Thyroid gland (tissue), 4 donors: ENCODE measurements at regions of chr6 and their contacts with region 1.

Region 1: DNA sequence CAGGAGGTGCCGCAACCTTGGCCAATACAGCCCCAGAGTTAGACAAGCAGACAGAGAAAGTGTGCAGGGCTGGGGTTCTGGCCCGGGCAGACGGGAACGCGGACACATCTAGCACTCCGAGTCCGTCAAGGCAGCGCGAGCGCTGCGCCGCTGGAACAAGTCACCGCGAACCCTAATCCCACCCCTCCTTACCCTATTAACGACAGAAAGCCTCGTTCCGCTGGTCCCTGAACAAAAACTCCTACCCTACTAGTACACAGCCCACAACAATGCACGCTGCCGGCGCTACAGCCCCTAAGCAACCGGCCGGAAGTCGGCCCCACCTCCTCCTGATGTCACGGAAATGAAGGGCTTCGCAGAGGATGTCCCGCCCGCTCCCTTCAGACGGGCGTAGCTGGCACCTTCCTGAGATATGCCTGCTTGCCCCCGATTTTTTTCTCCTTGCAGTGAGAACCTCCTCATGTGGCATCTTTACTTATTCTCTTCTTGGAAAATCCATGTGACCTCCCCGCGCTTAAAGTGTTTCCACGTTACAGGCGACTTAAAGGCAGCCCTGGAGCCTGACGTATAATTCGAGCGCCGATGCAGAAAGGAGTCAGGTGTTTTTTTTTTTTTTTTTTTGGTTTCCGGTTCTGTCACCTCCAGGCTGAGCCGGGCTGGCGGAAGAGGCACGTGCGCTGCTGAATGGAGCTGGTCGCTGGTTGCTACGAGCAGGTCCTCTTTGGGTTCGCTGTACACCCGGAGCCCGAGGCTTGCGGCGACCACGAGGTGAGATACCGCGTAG is at the starts of genes C6orf52 and PAK1IP1:
- DNase-seq: peak; percentile 92 to 94
- H3K4me3 ChIP-seq: peak within 1 kb of the TSS; percentile 50 to 91 (median 61)
- H3K27ac ChIP-seq: peak within 1 kb of the TSS; percentile 90 to 97 (median 96)
- H3K4me1 ChIP-seq: peaks cover 19 to 23% of the 10 kb centered on the region in 2 donors
- H3K27me3 ChIP-seq: no peaks in the 10 kb centered on the region
- CTCF ChIP-seq: no peak
- POLR2A ChIP-seq: peak in 1 of 2 donors; percentile 87
- total RNA-seq, gene C6orf52: not detected
- total RNA-seq, gene PAK1IP1: 8.8 to 15.6 (median 12.7) TPM

Region 2: DNA sequence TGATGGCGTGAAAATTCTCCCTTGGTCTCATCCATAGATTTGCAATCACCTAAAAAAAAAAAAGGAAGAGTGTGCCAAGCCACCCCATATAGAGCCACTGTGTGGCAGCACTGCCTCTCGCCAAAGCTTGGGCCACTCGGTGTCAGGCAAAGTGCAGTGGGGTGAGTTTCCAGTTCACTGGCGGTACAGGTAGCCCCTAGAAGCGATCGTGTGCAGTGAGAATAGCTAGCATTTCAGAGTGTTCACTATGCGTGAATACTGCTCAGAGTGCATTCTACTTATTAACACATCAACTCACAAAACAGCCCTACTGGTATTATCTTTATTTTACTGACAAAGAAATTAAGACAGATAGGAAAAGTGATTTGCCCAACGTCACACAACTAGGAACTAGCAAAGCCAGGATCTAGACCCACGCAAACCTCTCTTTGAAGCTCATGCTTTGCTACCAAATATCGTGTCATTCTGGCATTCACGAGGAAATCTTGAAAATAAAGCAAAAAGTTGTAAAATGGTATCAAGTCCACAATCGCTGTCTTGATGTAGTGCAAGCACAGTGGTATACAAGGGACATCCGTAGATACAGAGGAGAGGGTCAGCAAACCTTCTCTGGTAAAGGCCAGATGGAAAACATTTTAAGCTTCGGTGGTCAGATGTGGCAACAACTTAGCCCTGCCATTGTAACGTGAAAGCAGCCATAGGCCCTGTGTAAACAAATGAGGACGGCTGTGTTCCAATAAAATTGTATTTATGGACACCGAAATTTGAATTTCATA is 183.7 kb before region 1 on chr6:
- intact Hi-C with region 1: loop called (anchors 10 kb)
- DNase-seq: peak; percentile 83 to 86
- H3K4me3 ChIP-seq: no peak overlapping the region
- H3K27ac ChIP-seq: peak overlapping the region; percentile 9 to 66 (median 10)
- H3K4me1 ChIP-seq: peaks cover 7% of the 10 kb centered on the region in 2 donors
- H3K27me3 ChIP-seq: no peaks in the 10 kb centered on the region
- CTCF ChIP-seq: peak in 4 of 6 experiments; percentile 65 to 93 (median 78)
- POLR2A ChIP-seq: no peak

Region 3: DNA sequence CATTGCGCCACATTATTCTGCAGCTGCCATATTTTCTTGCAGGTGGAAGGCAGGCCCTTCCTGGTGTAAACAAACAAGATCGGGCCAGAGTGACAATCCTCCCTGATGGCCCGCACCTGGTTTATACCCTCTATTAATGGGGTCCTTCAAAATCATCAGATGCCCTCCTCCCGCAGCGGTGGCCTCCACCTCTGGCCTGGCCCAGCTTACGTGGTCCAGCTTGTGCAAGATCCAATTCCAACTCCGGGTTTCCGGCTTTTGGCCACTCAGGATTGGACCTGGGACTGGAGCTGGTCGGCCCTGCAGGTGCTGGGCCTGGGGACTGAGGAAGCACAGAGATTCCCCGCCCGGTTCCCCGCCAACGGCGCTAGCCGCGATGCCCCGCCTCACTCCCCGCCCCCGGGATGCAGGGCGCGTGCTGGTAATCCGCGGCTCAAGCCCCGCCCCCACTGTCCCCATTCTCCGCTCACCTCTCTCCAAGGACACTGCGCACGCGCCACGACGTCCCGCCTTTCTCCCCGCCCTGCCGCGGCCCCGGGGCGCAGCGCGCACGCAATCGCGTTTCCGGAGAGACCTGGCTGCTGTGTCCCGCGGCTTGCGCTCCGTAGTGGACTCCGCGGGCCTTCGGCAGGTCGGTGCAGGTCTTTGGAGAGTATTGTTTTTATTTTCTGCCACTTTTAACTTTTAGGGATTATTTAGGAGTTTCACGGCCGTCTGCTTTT is 52.9 kb after region 1 on chr6 and contains the start of gene TMEM14B:
- intact Hi-C with region 1: loop called (anchors 10 kb)
- DNase-seq: peak; percentile 100
- H3K4me3 ChIP-seq: peak within 1 kb of the TSS; percentile 56 to 69 (median 63)
- H3K27ac ChIP-seq: peak within 1 kb of the TSS; percentile 74 to 85 (median 80)
- H3K4me1 ChIP-seq: peaks cover 24 to 39% of the 10 kb centered on the region in 2 donors
- H3K27me3 ChIP-seq: no peaks in the 10 kb centered on the region
- CTCF ChIP-seq: peak in 2 of 6 experiments; percentile 1 to 22
- POLR2A ChIP-seq: peak; percentile 38 to 92
- total RNA-seq, gene TMEM14B: 114 to 217 (median 197) TPM